ENCODE measurements at regions of chr3 and their contacts with region 1.

Region 1: GRCh38 chr3:88113311-88114162 is 36.2 kb upstream of the C3orf38 start:
- DNase-seq: peak; percentile 31
- H3K4me3 ChIP-seq: no peak overlapping the region
- CTCF ChIP-seq: peak; percentile 63

Region 2: GRCh38 chr3:88019024-88019423 is 94.5 kb before region 1 on chr3:
- CTCF ChIA-PET with region 1: no interaction called
- POLR2A ChIA-PET with region 1: no interaction called
- DNase-seq: no peak
- H3K4me3 ChIP-seq: no peak overlapping the region
- CTCF ChIP-seq: no peak

Region 3: GRCh38 chr3:88058591-88059368 is 54.8 kb before region 1 on chr3 and contains the starts of genes CGGBP1 and ZNF654:
- CTCF ChIA-PET with region 1: interaction called, 23 read pairs
- POLR2A ChIA-PET with region 1: no interaction called
- DNase-seq: peak; percentile 96
- H3K4me3 ChIP-seq: peak within 1 kb of the TSS; percentile 96
- CTCF ChIP-seq: no peak

Region 4: GRCh38 chr3:88101142-88101541 is 12.4 kb before region 1 on chr3:
- CTCF ChIA-PET with region 1: interaction called, 53 read pairs
- POLR2A ChIA-PET with region 1: no interaction called
- DNase-seq: no peak
- H3K4me3 ChIP-seq: no peak overlapping the region
- CTCF ChIP-seq: no peak

Region 5: GRCh38 chr3:88137836-88138235 is 24.3 kb after region 1 on chr3:
- CTCF ChIA-PET with region 1: interaction called, 49 read pairs
- POLR2A ChIA-PET with region 1: no interaction called
- DNase-seq: no peak
- H3K4me3 ChIP-seq: no peak overlapping the region
- CTCF ChIP-seq: no peak

Region 6: GRCh38 chr3:88219138-88219792 is 105.7 kb after region 1 on chr3:
- CTCF ChIA-PET with region 1: no interaction called
- POLR2A ChIA-PET with region 1: no interaction called
- DNase-seq: no peak
- H3K4me3 ChIP-seq: no peak overlapping the region
- CTCF ChIP-seq: peak; percentile 56

Region 7: GRCh38 chr3:88440701-88441100 is 327.2 kb after region 1 on chr3:
- CTCF ChIA-PET with region 1: no interaction called
- POLR2A ChIA-PET with region 1: no interaction called
- DNase-seq: no peak
- H3K4me3 ChIP-seq: no peak overlapping the region
- CTCF ChIP-seq: no peak

Region 8: GRCh38 chr3:88589138-88589537 is 475.6 kb after region 1 on chr3:
- CTCF ChIA-PET with region 1: no interaction called
- POLR2A ChIA-PET with region 1: no interaction called
- DNase-seq: no peak
- H3K4me3 ChIP-seq: no peak overlapping the region
- CTCF ChIP-seq: no peak

Measured in AG04449 (cell line).